CD8-positive, alpha-beta T cell (primary cell): ENCODE measurements at regions of chr11 and their contacts with region 1.

Region 1: DNA sequence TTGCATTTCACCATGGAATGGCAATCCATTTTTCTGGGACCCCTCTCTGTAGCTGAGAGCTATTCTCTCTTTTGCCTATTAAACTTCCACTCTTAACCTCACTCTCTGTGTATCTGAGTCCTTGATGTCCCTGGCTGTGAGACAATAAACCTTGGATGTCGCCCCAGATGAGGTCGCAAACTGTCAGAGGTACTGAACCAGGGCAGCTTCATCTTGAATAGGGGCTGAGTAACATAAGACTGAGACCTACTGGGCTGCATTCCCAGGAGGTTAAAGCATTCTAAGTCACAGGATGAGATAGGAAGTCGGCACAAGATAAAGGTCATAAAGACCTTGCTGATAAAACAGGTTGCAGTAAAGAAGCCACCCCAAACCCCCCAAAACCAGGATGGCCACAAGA is 68.0 kb downstream of the RSF1 start:
- DNase-seq: no peak
- ATAC-seq: no peak
- H3K4me3 ChIP-seq: no peak overlapping the region
- H3K4me3 Mint-ChIP-seq: no peak overlapping the region
- H3K27ac ChIP-seq: no peak overlapping the region
- H3K27ac Mint-ChIP-seq: no peak overlapping the region
- H3K4me1 ChIP-seq: no peaks in the 10 kb centered on the region
- H3K4me1 Mint-ChIP-seq: peaks cover 46% of the 10 kb centered on the region
- H3K27me3 ChIP-seq: no peaks in the 10 kb centered on the region
- H3K27me3 Mint-ChIP-seq: no peaks in the 10 kb centered on the region
- CTCF ChIP-seq: no peak

Region 2: GRCh38 chr11:77771135-77771534 is 18.6 kb after region 1 on chr11:
- CTCF ChIA-PET with region 1: no interaction called
- POLR2A ChIA-PET with region 1: interaction called, 3 read pairs
- intact Hi-C with region 1: loop called in 1 of 2 experiments (anchors 2 kb)
- DNase-seq: peak in 1 of 9 experiments; percentile 15
- ATAC-seq: no peak
- H3K4me3 ChIP-seq: no peak overlapping the region
- H3K4me3 Mint-ChIP-seq: no peak overlapping the region
- H3K27ac ChIP-seq: peak overlapping the region in 1 of 2 experiments; percentile 0
- H3K27ac Mint-ChIP-seq: peak overlapping the region; percentile 2
- H3K4me1 ChIP-seq: peaks cover 22% of the 10 kb centered on the region
- H3K4me1 Mint-ChIP-seq: peaks cover 67% of the 10 kb centered on the region
- H3K27me3 ChIP-seq: no peaks in the 10 kb centered on the region
- H3K27me3 Mint-ChIP-seq: no peaks in the 10 kb centered on the region
- CTCF ChIP-seq: no peak